Activated T-helper 2 cell treated with anti-CD3 and anti-CD28 coated beads, Interferon-gamma antibody, Interleukin-2, Interleukin-4, amounts not matched to agents 10 μg/mL and 5 μg/mL and 100 μg/mL, durations not matched to agents 14 hours and 24 hours and 36 hours (primary cell): ENCODE measurements at regions of chr2 and their contacts with region 1.

Region 1: DNA sequence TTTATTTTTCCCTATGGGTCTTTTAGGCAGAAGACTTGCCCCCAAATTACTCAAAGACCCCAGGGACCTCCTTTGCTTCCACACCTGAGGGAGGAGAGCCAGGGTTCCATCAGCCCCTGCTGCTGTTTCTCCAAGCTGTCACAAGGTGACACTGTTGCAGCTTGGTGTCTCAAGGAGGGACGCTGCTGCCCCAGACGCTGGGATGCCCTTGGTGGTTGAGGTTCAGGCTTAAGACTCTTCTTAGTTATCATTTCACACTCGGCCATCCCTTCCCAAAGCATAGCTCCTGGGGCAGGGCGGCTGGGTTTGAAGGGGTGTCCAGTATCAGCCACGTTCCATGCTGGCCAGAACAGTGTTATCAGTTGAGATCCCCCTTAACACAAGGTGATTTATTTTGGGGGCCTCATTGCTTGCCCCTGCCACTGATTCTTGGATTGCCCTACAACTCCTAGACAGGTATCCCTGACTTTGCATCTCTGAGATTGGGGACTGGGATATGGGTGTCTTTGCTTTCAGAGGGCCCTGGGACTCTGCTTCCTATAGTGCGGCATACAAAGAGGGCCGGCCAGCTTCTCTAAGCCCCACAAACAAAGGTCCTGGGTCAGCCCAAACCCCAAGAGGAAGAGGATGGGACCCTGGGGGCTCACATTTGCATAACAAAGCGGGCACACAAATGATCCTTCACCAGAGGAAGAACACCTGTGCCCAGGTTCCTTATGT is 22.7 kb downstream of the GPR55 start:
- DNase-seq: no peak
- H3K4me3 Mint-ChIP-seq: no peak overlapping the region
- H3K27ac Mint-ChIP-seq: no peak overlapping the region
- H3K4me1 Mint-ChIP-seq: peaks cover 33% of the 10 kb centered on the region
- H3K27me3 Mint-ChIP-seq: peaks cover 35% of the 10 kb centered on the region

Region 2: GRCh38 chr2:230974096-230974913 is 72.0 kb after region 1 on chr2:
- intact Hi-C with region 1: no loop called
- DNase-seq: peak; percentile 57
- H3K4me3 Mint-ChIP-seq: peak overlapping the region; percentile 40
- H3K27ac Mint-ChIP-seq: peak overlapping the region; percentile 89
- H3K4me1 Mint-ChIP-seq: peaks cover 54% of the 10 kb centered on the region
- H3K27me3 Mint-ChIP-seq: peaks cover 33% of the 10 kb centered on the region

Region 3: GRCh38 chr2:231056453-231057424 is 154.4 kb after region 1 on chr2 and contains the start of gene PSMD1:
- intact Hi-C with region 1: loop called (anchors 2 kb)
- DNase-seq: peak; percentile 91
- H3K4me3 Mint-ChIP-seq: peak within 1 kb of the TSS; percentile 97
- H3K27ac Mint-ChIP-seq: peak within 1 kb of the TSS; percentile 100
- H3K4me1 Mint-ChIP-seq: peaks cover 48% of the 10 kb centered on the region
- H3K27me3 Mint-ChIP-seq: peaks cover 2% of the 10 kb centered on the region
- total RNA-seq, gene PSMD1: 180 and 194 TPM in 2 replicates

Region 4: GRCh38 chr2:231198291-231199173 is 296.2 kb after region 1 on chr2 and contains the start of gene ARMC9:
- intact Hi-C with region 1: no loop called
- DNase-seq: peak; percentile 72
- H3K4me3 Mint-ChIP-seq: peak within 1 kb of the TSS; percentile 89
- H3K27ac Mint-ChIP-seq: peak within 1 kb of the TSS; percentile 22
- H3K4me1 Mint-ChIP-seq: peaks cover 17% of the 10 kb centered on the region
- H3K27me3 Mint-ChIP-seq: peaks cover 18% of the 10 kb centered on the region
- total RNA-seq, gene ARMC9: 2.5 and 3.3 TPM in 2 replicates